ENCODE measurements at regions of chr6 and their contacts with region 1.

Region 1: GRCh38 chr6:85124472-85125354 is 325.2 kb upstream of the NT5E start:
- DNase-seq: no peak
- H3K4me3 ChIP-seq: no peak overlapping the region
- H3K27ac ChIP-seq: no peak overlapping the region
- H3K4me1 ChIP-seq: no peaks in the 10 kb centered on the region
- H3K27me3 ChIP-seq: no peaks in the 10 kb centered on the region
- CTCF ChIP-seq: no peak
- EP300 ChIP-seq: no peak
- POLR2A ChIP-seq: no peak

Region 2: GRCh38 chr6:84197708-84198107 is 927.0 kb before region 1 on chr6:
- in situ Hi-C with region 1: no loop called
- intact Hi-C with region 1: loop called (anchors 5 kb)
- DNase-seq: no peak
- H3K4me3 ChIP-seq: no peak overlapping the region
- H3K27ac ChIP-seq: no peak overlapping the region
- H3K4me1 ChIP-seq: no peaks in the 10 kb centered on the region
- H3K27me3 ChIP-seq: no peaks in the 10 kb centered on the region
- CTCF ChIP-seq: no peak
- EP300 ChIP-seq: no peak
- POLR2A ChIP-seq: no peak

Measured in transverse colon (tissue), 4 donors.